ENCODE measurements at regions of chr7 and their contacts with region 1.

Region 1: DNA sequence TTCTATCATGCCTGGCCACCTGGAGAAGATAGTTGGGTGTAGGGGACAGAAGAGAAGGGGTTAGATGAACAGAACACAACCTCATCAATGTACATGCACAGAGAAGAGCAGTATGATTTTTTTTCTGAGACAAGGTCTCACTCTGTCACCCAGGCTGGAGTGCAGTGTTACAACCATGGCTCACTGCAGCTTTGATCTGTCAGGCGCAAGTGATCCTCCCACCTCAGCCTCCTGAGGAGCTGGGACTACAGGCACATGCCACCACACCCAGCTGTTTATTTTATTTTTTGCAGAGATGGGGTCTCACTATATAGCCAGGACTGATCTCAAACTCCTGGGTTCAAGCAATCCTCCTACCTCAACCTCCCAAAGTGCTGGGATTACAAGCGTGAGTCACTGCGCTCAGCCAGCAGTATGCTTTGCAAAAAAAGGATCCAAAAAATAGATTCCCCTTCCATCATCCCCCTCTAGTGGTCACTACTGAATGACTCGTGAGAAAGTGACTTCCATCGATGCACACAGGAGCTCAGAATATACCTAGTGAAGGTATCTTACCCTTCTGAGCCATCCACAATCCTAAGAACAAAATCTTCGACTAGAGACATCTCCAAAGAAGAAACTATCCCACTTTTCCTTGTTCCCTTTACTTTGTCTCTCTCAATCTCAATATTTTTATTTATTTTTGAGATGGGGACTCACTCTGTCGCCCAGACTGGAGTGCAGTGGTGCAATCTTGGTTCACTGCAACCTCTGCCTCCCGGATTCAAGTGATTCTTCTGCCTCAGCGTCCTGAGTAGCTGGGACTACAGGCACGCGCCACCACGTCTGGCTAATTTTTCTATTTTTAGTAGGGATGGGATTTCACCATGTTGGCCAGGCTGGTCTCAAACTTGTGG is 21.0 kb downstream of the ZCWPW1 start:
- DNase-seq: peak; percentile 54 to 75 (median 61)
- H3K4me3 ChIP-seq: no peak overlapping the region
- H3K27ac ChIP-seq: no peak overlapping the region
- H3K4me1 ChIP-seq: peaks cover 0 to 3% of the 10 kb centered on the region in 2 donors
- H3K27me3 ChIP-seq: no peaks in the 10 kb centered on the region
- CTCF ChIP-seq: peak; percentile 52 to 81 (median 78)
- POLR2A ChIP-seq: no peak

Region 2: DNA sequence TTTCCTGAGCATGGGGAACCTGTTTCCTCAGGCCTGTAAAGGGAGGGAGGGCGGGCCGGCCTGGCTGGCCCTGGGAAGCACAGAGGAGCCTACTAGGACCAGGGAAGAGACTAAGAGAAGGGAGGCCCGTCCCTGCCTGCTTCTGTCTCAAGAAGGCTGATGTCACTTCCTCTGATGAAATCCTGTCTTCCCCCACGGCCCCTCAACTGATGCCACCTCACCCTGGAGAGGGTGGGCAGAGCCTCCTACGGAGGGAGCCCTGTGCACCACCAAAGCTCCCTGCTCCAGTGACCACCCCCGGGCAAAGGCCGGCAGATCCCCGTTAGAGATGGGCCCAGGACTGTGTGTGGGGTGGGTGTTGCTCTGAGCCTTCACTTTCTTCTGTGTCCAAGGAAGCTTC is 35.3 kb before region 1 on chr7:
- intact Hi-C with region 1: loop called in 1 of 2 experiments (anchors 5 kb)
- DNase-seq: peak in 2 of 7 donors; percentile 32 to 43
- H3K4me3 ChIP-seq: no peak overlapping the region
- H3K27ac ChIP-seq: peak overlapping the region in 4 of 5 donors; percentile 19 to 74 (median 35)
- H3K4me1 ChIP-seq: peaks cover 0 to 17% of the 10 kb centered on the region in 2 donors
- H3K27me3 ChIP-seq: no peaks in the 10 kb centered on the region
- CTCF ChIP-seq: no peak
- POLR2A ChIP-seq: no peak

Region 3: DNA sequence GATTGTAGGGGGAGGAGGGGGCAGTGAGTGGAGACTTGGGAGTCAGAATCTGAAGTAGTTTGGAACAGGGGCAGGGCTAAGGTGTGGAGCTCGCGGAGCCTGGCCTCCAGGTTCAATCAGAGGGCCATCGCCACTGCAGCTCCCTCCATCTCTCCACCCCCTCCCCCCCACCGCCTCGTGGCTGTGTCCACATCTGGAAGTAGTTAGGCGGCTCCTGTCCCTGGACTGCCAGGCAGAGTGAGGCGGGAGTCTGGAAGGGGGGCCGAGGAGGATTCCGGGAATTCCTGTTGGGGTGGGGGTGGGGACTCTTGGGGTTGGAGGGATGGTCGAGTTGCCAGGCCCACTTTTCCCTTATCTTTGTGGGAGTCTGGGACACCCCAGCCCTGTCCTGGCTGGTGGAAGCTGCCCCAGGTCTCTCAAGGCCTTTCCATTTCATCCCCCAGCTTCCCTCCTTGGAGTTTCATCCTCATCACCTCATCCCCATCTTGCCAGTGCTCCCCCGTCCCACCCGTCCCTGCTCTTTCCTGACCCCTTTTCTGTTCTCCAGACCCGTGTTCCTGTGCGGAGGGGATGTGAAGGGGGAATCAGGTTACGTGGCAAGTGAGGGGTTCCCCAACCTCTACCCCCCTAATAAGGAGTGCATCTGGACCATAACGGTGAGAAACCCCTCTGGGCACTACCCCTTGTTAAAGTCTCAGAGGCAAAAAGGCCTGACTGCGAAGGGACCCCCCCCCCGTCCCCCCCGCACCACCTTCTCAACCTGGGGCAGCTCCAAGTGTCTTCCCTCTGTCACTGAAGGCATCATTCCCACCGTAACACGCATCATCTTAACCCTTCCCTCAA is 195.6 kb after region 1 on chr7:
- intact Hi-C with region 1: no loop called
- DNase-seq: peak in 6 of 7 donors; percentile 56 to 83 (median 66)
- H3K4me3 ChIP-seq: peak overlapping the region in 1 of 4 donors; percentile 57
- H3K27ac ChIP-seq: peak overlapping the region in 4 of 5 donors; percentile 3 to 68 (median 44)
- H3K4me1 ChIP-seq: peaks cover 14 to 16% of the 10 kb centered on the region in 2 donors
- H3K27me3 ChIP-seq: no peaks in the 10 kb centered on the region
- CTCF ChIP-seq: no peak
- POLR2A ChIP-seq: no peak

Measured in adrenal gland (tissue), 19 donors.